Activated CD4-positive, alpha-beta T cell treated with anti-CD3 and anti-CD28 coated beads for 36 hours (primary cell): ENCODE measurements at regions of chr1 and their contacts with region 1.

Region 1: GRCh38 chr1:39609618-39610331 is 29.7 kb downstream of the HEYL start:
- DNase-seq: peak; percentile 92
- ATAC-seq: peak; percentile 92
- H3K4me3 Mint-ChIP-seq: no peak overlapping the region
- H3K27ac Mint-ChIP-seq: no peak overlapping the region
- H3K4me1 Mint-ChIP-seq: peaks cover 9% of the 10 kb centered on the region
- H3K27me3 Mint-ChIP-seq: no peaks in the 10 kb centered on the region

Region 2: DNA sequence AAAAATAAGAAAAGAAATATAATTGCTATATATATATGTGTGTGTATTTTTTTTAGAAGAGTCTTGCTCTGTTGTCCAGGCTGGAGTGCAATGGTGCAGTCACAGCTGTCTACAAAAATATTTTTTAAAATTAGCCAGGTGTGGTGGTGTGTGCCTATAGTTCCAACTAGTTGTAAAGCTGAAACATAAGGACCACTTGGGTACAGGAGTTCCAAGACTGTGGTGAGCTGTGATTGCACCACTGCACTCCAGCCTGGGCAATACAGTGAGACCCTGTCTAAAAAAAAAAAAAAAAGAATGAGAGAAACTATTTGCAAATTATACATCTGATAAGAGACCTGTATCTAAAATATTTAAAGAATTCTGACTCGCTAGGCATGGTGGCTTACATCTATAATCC is 76.3 kb before region 1 on chr1:
- CTCF ChIA-PET with region 1: no interaction called
- POLR2A ChIA-PET with region 1: no interaction called
- intact Hi-C with region 1: no loop called
- DNase-seq: no peak
- ATAC-seq: no peak
- H3K4me3 Mint-ChIP-seq: no peak overlapping the region
- H3K27ac Mint-ChIP-seq: no peak overlapping the region
- H3K4me1 Mint-ChIP-seq: no peaks in the 10 kb centered on the region
- H3K27me3 Mint-ChIP-seq: no peaks in the 10 kb centered on the region

Region 3: DNA sequence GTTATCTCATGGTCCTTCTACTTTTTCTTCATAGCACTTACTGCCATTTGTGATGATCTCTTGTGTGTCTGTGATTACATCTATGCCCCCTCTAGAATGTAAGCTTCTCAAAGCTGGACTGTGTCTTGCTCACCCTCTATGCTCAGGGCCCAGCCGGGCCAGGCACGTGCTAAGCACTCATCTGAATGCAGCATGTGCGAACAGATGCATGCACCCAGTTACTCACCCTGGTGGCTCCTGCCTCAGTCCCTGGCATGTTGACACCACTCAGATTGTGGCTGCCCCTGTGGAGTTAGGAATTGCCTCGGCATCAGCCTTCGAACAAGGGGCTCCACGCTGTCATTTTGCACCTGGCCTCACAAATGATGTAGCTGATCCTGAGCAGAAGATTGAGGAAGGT is 13.6 kb before region 1 on chr1:
- CTCF ChIA-PET with region 1: interaction called, 13 read pairs
- POLR2A ChIA-PET with region 1: no interaction called
- intact Hi-C with region 1: no loop called
- DNase-seq: no peak
- ATAC-seq: no peak
- H3K4me3 Mint-ChIP-seq: no peak overlapping the region
- H3K27ac Mint-ChIP-seq: no peak overlapping the region
- H3K4me1 Mint-ChIP-seq: peaks cover 19% of the 10 kb centered on the region
- H3K27me3 Mint-ChIP-seq: peaks cover 2% of the 10 kb centered on the region

Region 4: GRCh38 chr1:39646232-39647081 is 36.7 kb after region 1 on chr1:
- CTCF ChIA-PET with region 1: interaction called, 339 read pairs
- POLR2A ChIA-PET with region 1: no interaction called
- intact Hi-C with region 1: no loop called
- DNase-seq: no peak
- ATAC-seq: no peak
- H3K4me3 Mint-ChIP-seq: no peak overlapping the region
- H3K27ac Mint-ChIP-seq: no peak overlapping the region
- H3K4me1 Mint-ChIP-seq: no peaks in the 10 kb centered on the region
- H3K27me3 Mint-ChIP-seq: no peaks in the 10 kb centered on the region

Region 5: DNA sequence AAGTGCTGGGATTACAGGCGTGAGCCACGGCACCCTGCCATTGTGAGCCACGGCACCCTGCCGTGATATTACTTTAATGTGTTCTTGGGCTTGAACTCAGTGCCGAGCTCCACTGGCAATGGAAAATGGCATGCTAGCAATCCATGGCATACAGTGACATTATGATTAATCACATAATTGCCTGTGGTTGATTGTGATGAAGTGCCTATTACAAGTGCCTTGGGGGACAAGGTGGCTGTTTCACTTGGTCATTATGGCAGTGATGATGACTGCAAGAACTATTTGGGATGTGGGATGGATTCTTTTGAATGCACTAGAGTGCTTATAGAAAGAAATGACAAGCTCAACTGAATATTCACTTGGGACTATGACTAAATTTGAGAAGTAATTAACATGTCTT is 103.8 kb after region 1 on chr1:
- CTCF ChIA-PET with region 1: interaction called, 29 read pairs
- POLR2A ChIA-PET with region 1: no interaction called
- intact Hi-C with region 1: no loop called
- DNase-seq: no peak
- ATAC-seq: no peak
- H3K4me3 Mint-ChIP-seq: no peak overlapping the region
- H3K27ac Mint-ChIP-seq: no peak overlapping the region
- H3K4me1 Mint-ChIP-seq: no peaks in the 10 kb centered on the region
- H3K27me3 Mint-ChIP-seq: peaks cover 43% of the 10 kb centered on the region

Region 6: GRCh38 chr1:39738622-39739366 is 129.0 kb after region 1 on chr1 and contains the start of gene PPIE:
- CTCF ChIA-PET with region 1: interaction called, 6 read pairs
- POLR2A ChIA-PET with region 1: no interaction called
- intact Hi-C with region 1: loop called in 1 of 2 experiments (anchors 5 kb)
- DNase-seq: peak; percentile 99
- ATAC-seq: peak; percentile 98
- H3K4me3 Mint-ChIP-seq: peak within 1 kb of the TSS; percentile 96
- H3K27ac Mint-ChIP-seq: peak within 1 kb of the TSS; percentile 94
- H3K4me1 Mint-ChIP-seq: peaks cover 36% of the 10 kb centered on the region
- H3K27me3 Mint-ChIP-seq: peaks cover 7% of the 10 kb centered on the region
- total RNA-seq, gene PPIE: 55.3 to 70.4 TPM